ENCODE measurements at regions of chr15 and their contacts with region 1.

Region 1: GRCh38 chr15:40108855-40109735 is at the start of gene BMF:
- DNase-seq: peak; percentile 98
- H3K4me3 Mint-ChIP-seq: peak within 1 kb of the TSS; percentile 84
- H3K27ac Mint-ChIP-seq: peak within 1 kb of the TSS; percentile 31
- H3K4me1 Mint-ChIP-seq: peaks cover 40% of the 10 kb centered on the region
- H3K27me3 Mint-ChIP-seq: no peaks in the 10 kb centered on the region
- total RNA-seq, gene BMF: 9.4 to 10.3 TPM

Region 2: DNA sequence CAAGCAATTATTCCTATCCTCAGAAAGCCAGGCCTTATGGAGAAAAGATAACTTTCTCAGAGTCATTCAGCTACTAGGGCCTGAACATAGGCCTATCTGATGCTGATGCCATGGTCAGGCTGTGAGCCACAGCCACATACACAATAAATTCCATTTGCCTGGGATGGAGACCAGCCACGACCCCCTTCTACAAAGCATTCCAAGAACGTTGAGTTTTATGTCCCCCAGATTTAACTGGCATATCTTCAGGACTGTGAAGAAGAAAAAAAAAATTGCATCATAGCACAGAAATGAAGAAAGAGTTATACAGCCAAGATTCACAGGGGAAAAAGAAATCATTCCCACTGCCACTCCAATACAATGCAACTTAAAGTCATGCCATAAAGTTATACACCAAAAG is 428.2 kb before region 1 on chr15:
- CTCF ChIA-PET with region 1: no interaction called
- intact Hi-C with region 1: no loop called
- DNase-seq: no peak
- H3K4me3 Mint-ChIP-seq: no peak overlapping the region
- H3K27ac Mint-ChIP-seq: no peak overlapping the region
- H3K4me1 Mint-ChIP-seq: no peaks in the 10 kb centered on the region
- H3K27me3 Mint-ChIP-seq: no peaks in the 10 kb centered on the region

Region 3: GRCh38 chr15:40038638-40039543 is 70.2 kb before region 1 on chr15 and contains the start of gene SRP14:
- CTCF ChIA-PET with region 1: interaction called, 34 read pairs
- intact Hi-C with region 1: no loop called
- DNase-seq: peak; percentile 97
- H3K4me3 Mint-ChIP-seq: peak within 1 kb of the TSS; percentile 91
- H3K27ac Mint-ChIP-seq: peak within 1 kb of the TSS; percentile 92
- H3K4me1 Mint-ChIP-seq: peaks cover 37% of the 10 kb centered on the region
- H3K27me3 Mint-ChIP-seq: no peaks in the 10 kb centered on the region
- total RNA-seq, gene SRP14: 185 to 198 TPM

Region 4: GRCh38 chr15:40064221-40064894 is 44.7 kb before region 1 on chr15:
- CTCF ChIA-PET with region 1: interaction called, 10 read pairs
- intact Hi-C with region 1: loop called (anchors 1 kb)
- DNase-seq: peak; percentile 58
- H3K4me3 Mint-ChIP-seq: no peak overlapping the region
- H3K27ac Mint-ChIP-seq: peak overlapping the region; percentile 64
- H3K4me1 Mint-ChIP-seq: peaks cover 17% of the 10 kb centered on the region
- H3K27me3 Mint-ChIP-seq: no peaks in the 10 kb centered on the region

Region 5: GRCh38 chr15:40098489-40099261 is 10.4 kb before region 1 on chr15:
- CTCF ChIA-PET with region 1: interaction called, 189 read pairs
- intact Hi-C with region 1: loop called (anchors 1 kb)
- DNase-seq: peak; percentile 87
- H3K4me3 Mint-ChIP-seq: peak overlapping the region; percentile 54
- H3K27ac Mint-ChIP-seq: peak overlapping the region; percentile 96
- H3K4me1 Mint-ChIP-seq: peaks cover 70% of the 10 kb centered on the region
- H3K27me3 Mint-ChIP-seq: no peaks in the 10 kb centered on the region

Measured in activated naive CD4-positive, alpha-beta T cell treated with anti-CD3 and anti-CD28 coated beads for 36 hours (primary cell).